ENCODE measurements at regions of chr5 and their contacts with region 1.

Region 1: GRCh38 chr5:96896806-96897205 is 20.5 kb downstream of the ERAP2 start:
- DNase-seq: peak; percentile 79
- H3K4me3 Mint-ChIP-seq: peak overlapping the region; percentile 79
- H3K27ac Mint-ChIP-seq: peak overlapping the region; percentile 98
- H3K4me1 Mint-ChIP-seq: peaks cover 62% of the 10 kb centered on the region
- H3K27me3 Mint-ChIP-seq: no peaks in the 10 kb centered on the region

Region 2: GRCh38 chr5:95817440-95817839 is 1079.4 kb before region 1 on chr5:
- CTCF ChIA-PET with region 1: no interaction called
- intact Hi-C with region 1: loop called (anchors 5 kb)
- DNase-seq: peak; percentile 61
- H3K4me3 Mint-ChIP-seq: peak overlapping the region; percentile 77
- H3K27ac Mint-ChIP-seq: peak overlapping the region; percentile 91
- H3K4me1 Mint-ChIP-seq: peaks cover 69% of the 10 kb centered on the region
- H3K27me3 Mint-ChIP-seq: no peaks in the 10 kb centered on the region

Region 3: GRCh38 chr5:96702503-96703383 is 194.1 kb before region 1 on chr5:
- CTCF ChIA-PET with region 1: no interaction called
- intact Hi-C with region 1: loop called (anchors 1 kb)
- DNase-seq: peak; percentile 89
- H3K4me3 Mint-ChIP-seq: peak overlapping the region; percentile 87
- H3K27ac Mint-ChIP-seq: peak overlapping the region; percentile 88
- H3K4me1 Mint-ChIP-seq: peaks cover 47% of the 10 kb centered on the region
- H3K27me3 Mint-ChIP-seq: no peaks in the 10 kb centered on the region

Region 4: GRCh38 chr5:96861076-96861475 is 35.7 kb before region 1 on chr5:
- CTCF ChIA-PET with region 1: interaction called, 4 read pairs
- intact Hi-C with region 1: loop called (anchors 5 kb)
- DNase-seq: no peak
- H3K4me3 Mint-ChIP-seq: no peak overlapping the region
- H3K27ac Mint-ChIP-seq: no peak overlapping the region
- H3K4me1 Mint-ChIP-seq: peaks cover 28% of the 10 kb centered on the region
- H3K27me3 Mint-ChIP-seq: peaks cover 2% of the 10 kb centered on the region

Region 5: DNA sequence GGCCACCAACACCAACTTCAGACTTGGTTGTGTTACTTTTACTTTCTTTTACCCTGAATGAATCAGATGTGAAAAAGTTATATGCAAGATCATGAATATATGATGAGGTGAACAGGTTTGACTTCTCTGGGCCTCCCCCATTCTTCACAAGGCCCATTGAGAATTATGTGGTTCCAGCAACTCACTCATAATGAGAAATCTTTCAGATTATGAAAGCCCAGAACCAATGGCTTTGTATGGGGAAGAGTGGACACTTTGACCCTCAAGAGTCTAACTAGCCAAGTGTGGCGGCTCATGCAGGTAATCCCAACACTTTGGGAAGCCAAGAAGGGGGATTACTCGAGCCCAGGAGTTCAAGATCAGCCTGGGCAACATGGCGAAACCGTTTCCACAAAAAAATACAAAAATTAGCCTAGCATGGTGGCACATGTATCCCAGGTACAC is 23.0 kb after region 1 on chr5:
- CTCF ChIA-PET with region 1: interaction called, 3 read pairs
- intact Hi-C with region 1: loop called (anchors 1 kb)
- DNase-seq: peak; percentile 67
- H3K4me3 Mint-ChIP-seq: no peak overlapping the region
- H3K27ac Mint-ChIP-seq: peak overlapping the region; percentile 56
- H3K4me1 Mint-ChIP-seq: peaks cover 59% of the 10 kb centered on the region
- H3K27me3 Mint-ChIP-seq: no peaks in the 10 kb centered on the region

Region 6: DNA sequence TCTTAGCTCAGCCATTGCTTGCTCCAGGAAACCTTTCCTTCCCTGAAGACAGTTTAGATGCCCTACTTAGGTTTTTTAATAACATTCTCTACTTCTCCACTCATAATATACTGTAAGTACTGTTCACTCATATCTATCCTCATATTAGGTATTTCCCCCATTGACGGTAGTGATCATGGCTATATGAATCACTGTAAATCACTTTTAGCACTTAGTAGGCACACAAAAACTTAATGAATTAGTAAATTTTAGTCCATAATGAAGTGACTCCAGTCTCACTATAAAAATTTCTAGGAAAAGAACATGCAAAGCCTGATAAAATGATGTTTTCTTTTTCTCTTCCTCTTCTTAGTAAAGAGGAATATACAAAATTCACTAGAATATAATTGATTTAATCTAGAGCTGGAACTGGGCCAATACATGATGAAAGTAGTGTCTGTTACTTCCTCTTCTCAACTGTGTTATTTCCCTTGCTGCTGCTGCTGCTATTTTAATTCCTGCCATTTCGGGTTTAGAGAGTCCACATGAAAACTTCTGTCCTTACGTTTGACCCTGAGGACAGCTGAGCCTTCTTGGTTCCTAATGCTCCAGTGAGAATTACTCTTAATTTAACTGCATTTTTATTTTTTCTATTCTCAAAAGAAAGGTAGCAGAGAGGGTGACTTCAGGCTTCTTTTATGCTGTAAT is 112.5 kb after region 1 on chr5:
- CTCF ChIA-PET with region 1: no interaction called
- intact Hi-C with region 1: loop called (anchors 1 kb)
- DNase-seq: no peak
- H3K4me3 Mint-ChIP-seq: no peak overlapping the region
- H3K27ac Mint-ChIP-seq: peak overlapping the region; percentile 62
- H3K4me1 Mint-ChIP-seq: peaks cover 18% of the 10 kb centered on the region
- H3K27me3 Mint-ChIP-seq: no peaks in the 10 kb centered on the region